ENCODE measurements at regions of chr4 and their contacts with region 1.

Region 1: DNA sequence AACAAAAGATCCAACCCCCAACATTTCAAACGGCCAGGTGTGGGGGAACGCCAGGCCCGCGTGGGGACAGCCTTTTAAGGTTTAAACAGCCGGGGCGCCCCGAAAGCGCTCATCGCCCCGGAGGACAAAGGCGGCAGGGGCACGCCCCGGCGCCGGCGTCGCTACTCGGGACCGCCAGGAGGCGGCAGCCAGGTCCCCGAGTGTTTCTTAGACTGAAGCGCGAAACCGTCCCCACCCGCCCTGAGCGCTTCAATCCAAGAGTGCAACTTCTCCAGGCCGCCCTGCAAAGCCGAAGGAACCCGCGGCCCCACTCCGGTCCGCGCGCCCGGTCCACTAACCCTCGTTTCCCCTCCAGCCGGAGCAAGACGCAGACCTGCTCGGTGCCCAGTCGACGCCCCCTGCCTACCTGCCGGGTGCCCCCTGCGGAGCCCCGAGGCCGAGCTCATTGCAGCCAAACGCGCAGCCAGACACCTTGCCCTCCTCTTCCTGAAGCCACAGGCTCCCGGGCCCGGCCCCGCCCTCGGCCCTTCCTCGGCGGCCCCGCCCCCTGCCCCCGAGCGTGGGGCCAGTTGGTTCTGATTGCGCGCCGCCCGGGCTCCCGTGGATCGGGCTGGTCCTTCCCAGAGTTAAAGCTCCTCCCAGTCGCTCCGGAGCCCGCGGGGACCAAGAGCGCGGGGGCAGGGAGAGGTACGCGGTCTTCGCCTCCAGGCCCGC is at the start of gene CASP6:
- DNase-seq: peak; percentile 86
- ATAC-seq: peak; percentile 83
- H3K4me3 Mint-ChIP-seq: peak within 1 kb of the TSS; percentile 89
- H3K27ac Mint-ChIP-seq: peak within 1 kb of the TSS; percentile 78
- H3K4me1 Mint-ChIP-seq: peaks cover 35% of the 10 kb centered on the region
- H3K27me3 Mint-ChIP-seq: no peaks in the 10 kb centered on the region
- total RNA-seq, gene CASP6: 23.3 to 26.5 TPM

Region 2: DNA sequence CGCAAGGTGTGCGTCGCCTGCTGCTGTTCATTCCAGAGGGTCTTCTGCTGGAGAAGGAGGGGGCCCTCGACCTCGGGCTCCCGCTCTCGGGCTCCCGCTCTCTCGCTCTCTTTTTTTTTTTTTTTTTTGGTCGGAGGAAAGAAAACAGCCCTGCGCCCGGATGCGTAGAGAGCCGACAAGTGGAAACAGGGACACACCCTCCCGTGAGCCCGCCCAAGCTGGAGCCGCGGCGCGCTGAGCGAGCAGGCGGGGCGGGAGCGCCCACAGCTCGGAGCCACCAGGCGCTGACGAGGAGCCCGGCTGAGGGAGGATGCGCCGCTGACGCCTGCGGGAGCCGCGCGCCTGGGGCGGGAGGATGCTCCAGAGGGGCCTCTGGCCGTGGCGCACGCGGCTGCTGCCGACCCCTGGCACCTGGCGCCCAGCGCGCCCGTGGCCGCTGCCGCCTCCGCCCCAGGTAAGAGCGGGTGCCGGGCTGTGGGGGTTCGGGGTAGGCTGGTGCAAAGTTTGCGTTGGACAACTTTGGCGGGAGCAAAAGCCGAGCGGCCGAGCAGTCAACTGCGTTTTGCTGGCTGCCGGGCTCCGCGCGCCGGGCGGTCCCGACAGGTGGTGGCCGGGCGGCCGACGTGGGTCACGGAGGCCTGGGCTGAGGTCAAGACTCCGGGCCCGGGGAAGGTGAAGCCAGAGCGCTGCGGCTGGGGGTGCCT is 143.0 kb before region 1 on chr4 and contains the start of gene MCUB:
- CTCF ChIA-PET with region 1: interaction called, 4 read pairs
- POLR2A ChIA-PET with region 1: interaction called, 5 read pairs
- intact Hi-C with region 1: loop called (anchors 1 to 10 kb)
- DNase-seq: peak; percentile 96
- ATAC-seq: peak; percentile 89
- H3K4me3 Mint-ChIP-seq: peak within 1 kb of the TSS; percentile 86
- H3K27ac Mint-ChIP-seq: peak within 1 kb of the TSS; percentile 97
- H3K4me1 Mint-ChIP-seq: peaks cover 49% of the 10 kb centered on the region
- H3K27me3 Mint-ChIP-seq: no peaks in the 10 kb centered on the region
- total RNA-seq, gene MCUB: 58.2 to 80.1 TPM

Region 3: GRCh38 chr4:109588176-109588575 is 114.9 kb before region 1 on chr4:
- CTCF ChIA-PET with region 1: interaction called, 3 read pairs
- POLR2A ChIA-PET with region 1: no interaction called
- intact Hi-C with region 1: loop called in 1 of 2 experiments (anchors 2 kb)
- DNase-seq: peak; percentile 82
- ATAC-seq: peak; percentile 99
- H3K4me3 Mint-ChIP-seq: peak overlapping the region; percentile 11
- H3K27ac Mint-ChIP-seq: peak overlapping the region; percentile 86
- H3K4me1 Mint-ChIP-seq: peaks cover 84% of the 10 kb centered on the region
- H3K27me3 Mint-ChIP-seq: no peaks in the 10 kb centered on the region

Region 4: DNA sequence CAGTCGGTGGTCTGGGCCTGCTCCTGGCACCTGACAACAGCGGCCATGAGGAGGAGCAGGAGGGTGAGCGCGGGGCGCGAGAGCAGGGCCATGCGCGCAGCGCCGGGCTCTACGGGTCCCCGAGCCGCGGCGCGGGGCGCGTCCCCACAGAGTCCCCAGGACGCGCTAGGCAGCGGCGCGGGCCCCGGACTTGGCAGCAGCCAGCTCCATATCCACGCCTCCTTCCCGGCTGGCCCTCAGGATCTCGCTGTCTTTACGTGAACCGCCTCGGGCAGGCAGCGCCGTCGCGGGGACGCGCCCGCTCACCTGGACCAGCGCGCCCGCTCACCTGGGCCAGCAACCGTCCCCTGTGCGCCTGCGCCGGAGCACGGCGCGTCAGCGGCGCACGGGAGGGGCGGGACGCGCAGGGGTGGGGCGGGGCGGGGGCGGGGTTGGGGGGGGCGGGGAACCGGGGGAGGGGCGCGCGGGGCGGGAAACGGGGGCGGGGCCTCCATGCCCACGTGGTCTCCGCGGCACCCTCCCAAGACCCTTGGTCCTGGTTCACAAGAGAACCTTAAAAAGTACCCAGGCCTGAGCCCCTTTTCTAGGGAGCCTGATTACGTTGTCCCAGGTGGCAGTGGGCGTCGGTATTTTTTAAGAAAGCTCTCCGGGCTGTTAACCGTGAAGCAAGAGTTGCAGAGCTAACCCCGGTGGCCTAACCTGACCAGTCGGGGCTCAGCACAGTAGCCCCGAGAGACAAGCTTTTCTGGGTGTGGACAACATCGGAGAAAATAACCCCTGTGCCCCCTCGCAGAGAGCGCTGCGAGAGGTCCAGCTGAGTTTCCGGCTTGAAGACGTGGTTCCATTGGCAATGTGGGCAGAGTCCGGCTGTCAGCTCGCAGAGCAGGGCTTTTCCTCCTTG is 26.9 kb after region 1 on chr4 and contains the start of gene PLA2G12A:
- CTCF ChIA-PET with region 1: interaction called, 4 read pairs
- POLR2A ChIA-PET with region 1: interaction called, 7 read pairs
- intact Hi-C with region 1: loop called (anchors 1 to 2 kb)
- DNase-seq: peak; percentile 85
- ATAC-seq: peak; percentile 87
- H3K4me3 Mint-ChIP-seq: peak within 1 kb of the TSS; percentile 84
- H3K27ac Mint-ChIP-seq: peak within 1 kb of the TSS; percentile 71
- H3K4me1 Mint-ChIP-seq: peaks cover 14% of the 10 kb centered on the region
- H3K27me3 Mint-ChIP-seq: no peaks in the 10 kb centered on the region
- total RNA-seq, gene PLA2G12A: 17.9 to 31.1 TPM

Region 5: DNA sequence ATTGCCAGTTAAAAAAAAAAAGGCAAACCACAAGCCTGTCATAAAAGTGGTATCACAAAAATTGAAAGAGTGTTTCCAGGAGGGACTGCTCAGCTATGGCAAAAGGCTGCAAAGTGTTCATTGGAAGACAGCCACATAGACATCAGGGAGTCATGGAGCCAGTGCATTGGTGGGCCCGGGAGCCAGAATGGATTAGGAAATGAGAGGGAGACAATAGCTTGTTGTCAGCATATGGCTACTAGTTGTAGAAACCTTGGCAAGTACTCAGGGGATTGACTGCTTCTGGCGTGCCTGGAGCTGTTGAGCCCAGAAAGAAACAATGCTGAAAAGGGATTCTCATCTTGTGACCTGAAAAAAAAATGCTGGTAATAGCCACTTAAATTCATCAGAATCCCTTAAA is 117.5 kb after region 1 on chr4:
- CTCF ChIA-PET with region 1: interaction called, 3 read pairs
- POLR2A ChIA-PET with region 1: no interaction called
- intact Hi-C with region 1: loop called (anchors 1 to 2 kb)
- DNase-seq: no peak
- ATAC-seq: no peak
- H3K4me3 Mint-ChIP-seq: peak overlapping the region; percentile 5
- H3K27ac Mint-ChIP-seq: peak overlapping the region; percentile 80
- H3K4me1 Mint-ChIP-seq: peaks cover 62% of the 10 kb centered on the region
- H3K27me3 Mint-ChIP-seq: no peaks in the 10 kb centered on the region

Region 6: DNA sequence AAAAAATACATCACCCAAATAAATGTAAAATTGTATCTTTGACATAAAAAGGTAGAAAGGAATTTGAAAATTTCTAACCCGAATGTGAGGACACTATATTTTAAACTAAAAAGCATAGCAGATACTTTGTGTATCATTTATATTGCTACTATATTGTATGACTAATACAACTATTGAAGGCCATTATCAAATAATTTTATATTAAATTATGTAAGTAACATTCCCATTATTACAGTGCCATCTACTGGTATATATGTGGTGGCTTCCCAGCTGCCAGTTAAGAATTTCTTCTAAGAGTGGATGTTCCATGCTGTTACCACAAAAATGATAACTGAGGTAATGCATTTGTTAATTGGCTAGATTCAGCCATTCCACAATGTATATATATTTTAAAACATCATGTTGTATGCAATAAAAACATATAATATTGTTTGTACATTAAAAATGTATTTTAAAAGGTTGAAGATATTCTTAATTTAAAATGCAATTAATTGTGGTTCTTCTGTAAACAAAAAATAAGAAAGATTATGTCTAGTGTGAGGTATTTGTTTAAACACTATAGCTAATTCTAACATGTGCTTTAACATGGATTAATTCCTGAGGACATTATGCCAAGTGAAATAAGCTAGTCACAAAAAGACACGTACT is 274.9 kb after region 1 on chr4:
- CTCF ChIA-PET with region 1: interaction called, 3 read pairs
- POLR2A ChIA-PET with region 1: no interaction called
- intact Hi-C with region 1: loop called in 1 of 2 experiments (anchors 5 kb)
- DNase-seq: no peak
- ATAC-seq: no peak
- H3K4me3 Mint-ChIP-seq: no peak overlapping the region
- H3K27ac Mint-ChIP-seq: no peak overlapping the region
- H3K4me1 Mint-ChIP-seq: no peaks in the 10 kb centered on the region
- H3K27me3 Mint-ChIP-seq: peaks cover 12% of the 10 kb centered on the region

Region 7: GRCh38 chr4:110172972-110173371 is 469.9 kb after region 1 on chr4:
- CTCF ChIA-PET with region 1: no interaction called
- POLR2A ChIA-PET with region 1: no interaction called
- intact Hi-C with region 1: no loop called
- DNase-seq: no peak
- ATAC-seq: no peak
- H3K4me3 Mint-ChIP-seq: no peak overlapping the region
- H3K27ac Mint-ChIP-seq: no peak overlapping the region
- H3K4me1 Mint-ChIP-seq: no peaks in the 10 kb centered on the region
- H3K27me3 Mint-ChIP-seq: no peaks in the 10 kb centered on the region

Measured in activated CD4-positive, alpha-beta T cell treated with anti-CD3 and anti-CD28 coated beads for 36 hours (primary cell).